ENCODE measurements at regions of chr9 and their contacts with region 1.

Region 1: DNA sequence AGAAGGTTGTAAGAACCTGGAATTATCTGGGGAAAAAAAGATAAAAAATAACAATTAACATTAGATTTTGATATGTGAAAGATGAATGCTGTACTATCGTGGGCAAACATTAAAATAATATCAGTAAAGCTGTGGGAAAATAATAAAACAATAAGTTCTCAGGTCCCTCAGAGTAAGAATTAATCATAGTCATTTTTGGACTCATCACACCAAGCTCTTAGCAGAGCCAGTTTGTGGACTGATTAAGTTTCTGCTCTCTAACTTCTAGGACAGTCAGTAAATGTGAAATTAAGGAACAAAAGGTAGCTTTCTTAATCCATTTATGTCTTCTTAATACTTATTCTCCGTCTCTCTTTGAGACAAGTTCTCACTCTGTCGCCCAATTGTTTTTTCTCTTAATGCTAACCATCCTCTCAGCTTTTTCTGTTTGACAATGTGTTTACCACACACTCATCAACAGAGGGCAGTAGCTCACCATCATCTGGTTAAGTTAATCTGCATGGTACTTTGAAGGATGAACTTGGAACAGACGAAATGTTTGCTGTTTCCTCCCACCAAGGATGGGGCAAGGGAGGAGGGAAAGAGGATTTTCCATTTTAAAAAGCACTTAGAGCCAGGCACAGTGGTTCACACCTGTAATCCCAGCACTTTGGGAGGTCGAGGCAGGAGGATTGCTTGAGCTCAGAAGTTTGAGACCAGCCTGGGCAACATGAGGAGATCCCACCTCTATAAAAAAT is 5.3 kb upstream of the ACO1 start:
- DNase-seq: peak in 2 of 5 donors; percentile 22 to 40
- ATAC-seq: peak; percentile 65 to 89 (median 86)
- H3K4me3 ChIP-seq: no peak overlapping the region
- H3K27ac ChIP-seq: no peak overlapping the region
- H3K4me1 ChIP-seq: peaks cover 0 to 18% (median 2%) of the 10 kb centered on the region in 12 donors
- H3K27me3 ChIP-seq: peaks cover 0 to 4% (median 0%) of the 10 kb centered on the region in 9 donors
- CTCF ChIP-seq: peak; percentile 62 to 87 (median 77)
- POLR2A ChIP-seq: no peak

Region 2: DNA sequence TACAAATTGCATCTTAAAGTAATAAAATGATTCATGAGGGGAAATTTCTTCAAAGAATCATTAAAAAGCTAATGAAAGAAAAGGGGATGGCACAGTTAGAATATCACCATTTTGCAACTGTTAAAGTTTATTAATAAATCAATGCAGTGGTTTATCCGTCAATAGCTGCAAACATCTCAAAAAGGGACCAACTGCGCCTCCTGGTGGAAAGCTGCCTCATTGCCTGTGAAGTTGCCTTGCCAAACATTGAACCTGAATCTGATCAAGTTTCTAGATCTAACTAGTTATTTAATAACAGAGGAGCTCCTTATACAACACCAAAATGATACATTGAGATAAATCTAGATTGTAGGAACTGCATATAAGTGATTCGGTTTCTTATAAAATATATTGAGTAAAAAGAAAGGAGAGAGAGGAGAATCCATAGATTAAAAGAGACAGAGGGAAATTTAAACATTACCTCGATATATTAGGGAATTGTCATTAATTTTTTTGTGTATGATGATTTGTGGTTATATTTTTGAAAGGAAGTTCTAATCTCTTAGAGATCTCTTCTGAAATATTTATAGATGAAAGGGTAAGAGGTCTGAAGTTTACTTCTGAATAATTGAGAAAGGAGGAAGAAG is 200.7 kb after region 1 on chr9:
- intact Hi-C with region 1: loop called (anchors 1 to 2 kb)
- DNase-seq: peak; percentile 36 to 79 (median 54)
- ATAC-seq: peak in 1 of 4 donors; percentile 56
- H3K4me3 ChIP-seq: peak overlapping the region in 2 of 12 donors; percentile 1 to 16
- H3K27ac ChIP-seq: no peak overlapping the region
- H3K4me1 ChIP-seq: peaks cover 0 to 4% (median 0%) of the 10 kb centered on the region in 12 donors
- H3K27me3 ChIP-seq: peaks cover 0 to 10% (median 0%) of the 10 kb centered on the region in 9 donors
- CTCF ChIP-seq: peak; percentile 88 to 97 (median 94)
- POLR2A ChIP-seq: no peak

Region 3: GRCh38 chr9:32783169-32783891 is 404.2 kb after region 1 on chr9 and contains the start of gene TMEM215:
- intact Hi-C with region 1: no loop called
- DNase-seq: peak in 2 of 5 donors; percentile 27 to 56
- ATAC-seq: no peak
- H3K4me3 ChIP-seq: peak within 1 kb of the TSS in 7 of 12 donors; percentile 1 to 29 (median 15)
- H3K27ac ChIP-seq: no peak within 1 kb of the TSS
- H3K4me1 ChIP-seq: peaks cover 0 to 12% (median 0%) of the 10 kb centered on the region in 12 donors
- H3K27me3 ChIP-seq: peaks cover 8 to 62% (median 39%) of the 10 kb centered on the region in 9 donors
- CTCF ChIP-seq: no peak
- POLR2A ChIP-seq: no peak
- total RNA-seq, gene TMEM215: not detected

Measured in heart left ventricle (tissue), 16 donors.